Prostate gland (tissue), 2 donors: ENCODE measurements at regions of chr16 and their contacts with region 1.

Region 1: DNA sequence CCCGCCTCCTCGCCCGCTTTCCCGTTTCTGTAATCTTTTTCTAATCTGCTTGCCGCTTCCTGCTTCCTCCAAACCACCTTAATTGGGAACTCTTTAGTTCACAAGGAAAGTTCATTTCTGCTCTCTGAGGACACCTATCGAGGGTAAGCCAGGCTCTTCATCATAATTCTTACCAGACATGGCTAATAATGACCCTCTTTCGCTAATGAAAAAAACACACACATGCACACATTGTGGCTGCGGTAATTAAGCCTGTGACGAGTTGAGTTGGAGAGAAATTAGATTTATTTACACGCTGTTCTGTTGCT is 100.6 kb downstream of the ZNF423 start:
- DNase-seq: peak; percentile 16
- H3K4me3 ChIP-seq: peak overlapping the region; percentile 14 to 18
- H3K27ac ChIP-seq: peak overlapping the region; percentile 37 to 42
- H3K4me1 ChIP-seq: no peaks in the 10 kb centered on the region
- H3K27me3 ChIP-seq: no peaks in the 10 kb centered on the region
- CTCF ChIP-seq: peak in 3 of 4 experiments; percentile 24 to 46 (median 45)
- POLR2A ChIP-seq: no peak

Region 2: GRCh38 chr16:49608779-49609178 is 146.5 kb before region 1 on chr16:
- intact Hi-C with region 1: loop called (anchors 5 kb)
- DNase-seq: no peak
- H3K4me3 ChIP-seq: no peak overlapping the region
- H3K27ac ChIP-seq: no peak overlapping the region
- H3K4me1 ChIP-seq: no peaks in the 10 kb centered on the region
- H3K27me3 ChIP-seq: peaks cover 2% of the 10 kb centered on the region
- CTCF ChIP-seq: peak in 1 of 4 experiments; percentile 42
- POLR2A ChIP-seq: no peak